ENCODE measurements at regions of chr1 and their contacts with region 1.

Region 1: GRCh38 chr1:203861379-203862184 is at the start of gene SNRPE:
- DNase-seq: peak; percentile 98
- ATAC-seq: peak; percentile 98
- H3K4me3 ChIP-seq: peak within 1 kb of the TSS; percentile 78 to 90
- H3K27ac ChIP-seq: peak within 1 kb of the TSS; percentile 78
- H3K4me1 ChIP-seq: peaks cover 4 to 20% of the 10 kb centered on the region in 2 experiments; a peak in 3 of 4 replicates
- H3K27me3 ChIP-seq: no peaks in the 10 kb centered on the region
- CTCF ChIP-seq: peak; percentile 84 to 97 (median 92)
- POLR2A ChIP-seq: peak; percentile 52
- RAD21 ChIP-seq: peak; percentile 98
- total RNA-seq, gene SNRPE: 288 TPM

Region 2: DNA sequence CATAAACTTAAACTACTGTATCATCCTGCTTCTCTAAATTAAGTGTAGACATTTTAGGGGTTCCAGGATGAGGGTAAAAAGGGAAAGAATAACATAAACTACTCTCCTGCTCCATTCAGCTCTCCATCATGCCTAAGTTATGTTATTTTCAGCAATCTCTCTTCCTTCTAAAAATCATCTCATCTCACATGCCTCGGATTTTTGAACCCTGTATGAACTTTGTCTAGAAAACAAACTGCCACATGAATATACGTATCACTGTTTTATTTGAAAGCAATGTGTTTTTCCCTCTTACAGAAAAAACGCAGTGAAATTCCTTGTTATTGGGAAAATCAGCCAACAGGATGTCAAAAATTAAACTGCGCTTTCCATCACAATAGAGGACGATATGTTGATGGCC is 33.6 kb before region 1 on chr1:
- CTCF ChIA-PET with region 1: no interaction called
- POLR2A ChIA-PET with region 1: no interaction called
- RAD21 ChIA-PET with region 1: no interaction called
- intact Hi-C with region 1: no loop called
- DNase-seq: no peak
- ATAC-seq: no peak
- H3K4me3 ChIP-seq: no peak overlapping the region
- H3K27ac ChIP-seq: no peak overlapping the region
- H3K4me1 ChIP-seq: no peaks in the 10 kb centered on the region
- H3K27me3 ChIP-seq: no peaks in the 10 kb centered on the region
- CTCF ChIP-seq: no peak
- POLR2A ChIP-seq: no peak
- RAD21 ChIP-seq: no peak

Region 3: DNA sequence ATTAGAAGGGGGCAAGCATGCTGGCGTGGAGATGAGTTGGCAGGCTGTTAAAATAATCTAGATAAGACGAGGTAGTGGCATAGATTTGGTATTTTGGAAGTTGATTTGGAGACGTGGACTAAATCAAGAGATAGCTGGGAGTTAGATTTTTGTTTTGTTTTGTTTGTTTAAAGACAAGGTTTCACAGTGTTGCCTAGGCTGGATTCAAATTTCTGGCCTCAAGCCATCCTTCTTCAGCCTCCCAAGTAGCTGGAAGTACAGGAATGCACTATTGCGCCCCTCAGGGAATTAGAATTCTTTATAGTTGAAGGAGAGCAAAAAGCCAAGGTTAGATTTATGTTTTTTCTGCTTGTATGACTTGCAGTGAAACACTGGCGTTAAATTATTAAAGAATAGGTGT is 22.5 kb before region 1 on chr1:
- CTCF ChIA-PET with region 1: no interaction called
- POLR2A ChIA-PET with region 1: no interaction called
- RAD21 ChIA-PET with region 1: no interaction called
- intact Hi-C with region 1: no loop called
- DNase-seq: no peak
- ATAC-seq: no peak
- H3K4me3 ChIP-seq: no peak overlapping the region
- H3K27ac ChIP-seq: no peak overlapping the region
- H3K4me1 ChIP-seq: no peaks in the 10 kb centered on the region
- H3K27me3 ChIP-seq: no peaks in the 10 kb centered on the region
- CTCF ChIP-seq: no peak
- POLR2A ChIP-seq: no peak
- RAD21 ChIP-seq: no peak

Region 4: DNA sequence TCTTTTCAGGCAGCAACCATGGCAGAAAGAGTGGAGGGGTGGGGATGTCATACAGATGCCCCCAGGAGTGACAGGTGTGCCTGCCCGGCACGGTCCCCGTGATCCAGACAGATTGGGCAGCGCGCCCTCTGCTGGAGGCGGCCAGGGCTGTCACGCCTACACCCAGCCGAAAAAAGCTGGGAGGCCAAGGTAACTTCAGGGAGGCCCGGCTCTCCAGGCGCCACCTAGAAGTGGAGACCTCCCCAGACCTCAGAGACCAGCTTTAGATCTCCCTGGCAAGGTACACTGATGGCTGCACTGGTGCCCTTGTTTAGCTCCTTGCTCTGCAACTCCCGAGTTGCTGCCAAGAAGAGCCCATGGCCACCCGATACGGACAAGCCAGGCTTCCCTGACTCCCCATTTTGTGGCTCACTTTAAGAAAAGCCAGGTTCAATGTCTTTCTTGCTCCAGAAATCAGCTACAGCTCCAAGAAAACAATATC is 345.6 kb after region 1 on chr1:
- CTCF ChIA-PET with region 1: interaction called, 4 read pairs
- POLR2A ChIA-PET with region 1: no interaction called
- RAD21 ChIA-PET with region 1: no interaction called
- intact Hi-C with region 1: loop called (anchors 2 kb)
- DNase-seq: peak; percentile 18
- ATAC-seq: peak; percentile 99
- H3K4me3 ChIP-seq: no peak overlapping the region
- H3K27ac ChIP-seq: no peak overlapping the region
- H3K4me1 ChIP-seq: peaks cover 8 to 27% of the 10 kb centered on the region in 2 experiments
- H3K27me3 ChIP-seq: no peaks in the 10 kb centered on the region
- CTCF ChIP-seq: peak; percentile 87 to 95 (median 91)
- POLR2A ChIP-seq: no peak
- RAD21 ChIP-seq: peak; percentile 79

Region 5: GRCh38 chr1:204213668-204214662 is 352.4 kb after region 1 on chr1 and contains the start of gene GOLT1A:
- CTCF ChIA-PET with region 1: no interaction called
- POLR2A ChIA-PET with region 1: no interaction called
- RAD21 ChIA-PET with region 1: no interaction called
- intact Hi-C with region 1: loop called (anchors 2 kb)
- DNase-seq: peak; percentile 85
- ATAC-seq: peak; percentile 96
- H3K4me3 ChIP-seq: peak within 1 kb of the TSS; percentile 70 to 72
- H3K27ac ChIP-seq: peak within 1 kb of the TSS; percentile 50; the same call in 1 of the 2 replicates
- H3K4me1 ChIP-seq: peaks cover 6 to 23% of the 10 kb centered on the region in 2 experiments; a peak in 3 of 4 replicates
- H3K27me3 ChIP-seq: no peaks in the 10 kb centered on the region
- CTCF ChIP-seq: peak; percentile 74 to 87 (median 77)
- POLR2A ChIP-seq: no peak
- RAD21 ChIP-seq: peak; percentile 84
- total RNA-seq, gene GOLT1A: 8.0 TPM

Region 6: GRCh38 chr1:204257954-204258752 is 396.6 kb after region 1 on chr1:
- CTCF ChIA-PET with region 1: no interaction called
- POLR2A ChIA-PET with region 1: no interaction called
- RAD21 ChIA-PET with region 1: no interaction called
- intact Hi-C with region 1: loop called (anchors 1 kb)
- DNase-seq: peak; percentile 37
- ATAC-seq: peak; percentile 97
- H3K4me3 ChIP-seq: no peak overlapping the region
- H3K27ac ChIP-seq: no peak overlapping the region
- H3K4me1 ChIP-seq: no peaks in the 10 kb centered on the region
- H3K27me3 ChIP-seq: no peaks in the 10 kb centered on the region
- CTCF ChIP-seq: peak; percentile 85 to 93 (median 91)
- POLR2A ChIP-seq: no peak
- RAD21 ChIP-seq: peak; percentile 88

Region 7: GRCh38 chr1:204363335-204364124 is 501.9 kb after region 1 on chr1:
- CTCF ChIA-PET with region 1: no interaction called
- POLR2A ChIA-PET with region 1: no interaction called
- RAD21 ChIA-PET with region 1: no interaction called
- intact Hi-C with region 1: loop called (anchors 1 kb)
- DNase-seq: peak; percentile 54
- ATAC-seq: peak; percentile 74
- H3K4me3 ChIP-seq: peak overlapping the region; percentile 10 to 26
- H3K27ac ChIP-seq: no peak overlapping the region; the same call in 1 of the 2 replicates
- H3K4me1 ChIP-seq: peaks cover 6 to 20% of the 10 kb centered on the region in 2 experiments; a peak in 3 of 4 replicates
- H3K27me3 ChIP-seq: no peaks in the 10 kb centered on the region
- CTCF ChIP-seq: peak; percentile 94 to 96 (median 95)
- POLR2A ChIP-seq: peak; percentile 9
- RAD21 ChIP-seq: peak; percentile 99

Measured in HCT116 (cell line).